ENCODE measurements at regions of chr22 and their contacts with region 1.

Region 1: DNA sequence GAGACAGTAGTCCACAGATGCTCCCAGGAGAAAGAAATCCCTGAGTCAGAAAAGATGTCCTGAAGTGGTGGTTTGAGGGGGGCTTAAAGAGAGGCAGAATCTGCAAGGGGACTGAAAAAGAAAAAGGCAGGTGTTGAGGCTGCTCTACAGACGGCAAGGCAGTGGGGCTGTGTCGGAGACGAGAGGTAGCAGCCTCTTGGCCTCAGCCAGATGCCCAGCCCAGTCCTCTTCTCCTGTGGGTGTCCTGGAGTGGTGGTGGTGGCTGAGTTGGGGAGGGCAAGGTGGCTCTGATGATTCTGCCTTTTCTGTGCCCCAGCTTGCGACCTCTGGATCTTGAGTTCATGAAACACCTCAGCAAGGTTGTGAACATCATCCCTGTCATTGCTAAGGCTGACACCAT is 9.3 kb upstream of the WBP2NL start:
- DNase-seq: peak; percentile 39 to 48
- ATAC-seq: no peak
- H3K4me3 ChIP-seq: no peak overlapping the region
- H3K27ac ChIP-seq: no peak overlapping the region
- H3K4me1 ChIP-seq: no peaks in the 10 kb centered on the region
- H3K27me3 ChIP-seq: no peaks in the 10 kb centered on the region

Region 2: GRCh38 chr22:41798736-41799135 is 190.5 kb before region 1 on chr22:
- intact Hi-C with region 1: no loop called
- DNase-seq: no peak
- ATAC-seq: no peak
- H3K4me3 ChIP-seq: no peak overlapping the region
- H3K27ac ChIP-seq: no peak overlapping the region
- H3K4me1 ChIP-seq: no peaks in the 10 kb centered on the region
- H3K27me3 ChIP-seq: no peaks in the 10 kb centered on the region

Region 3: GRCh38 chr22:41935015-41935351 is 54.3 kb before region 1 on chr22:
- intact Hi-C with region 1: loop called in 1 of 2 experiments (anchors 2 kb)
- DNase-seq: peak in 1 of 2 donors; percentile 47
- ATAC-seq: no peak
- H3K4me3 ChIP-seq: no peak overlapping the region
- H3K27ac ChIP-seq: no peak overlapping the region
- H3K4me1 ChIP-seq: no peaks in the 10 kb centered on the region
- H3K27me3 ChIP-seq: no peaks in the 10 kb centered on the region

Measured in aorta (tissue), 5 donors.